ENCODE measurements at regions of chr5 and their contacts with region 1.

Region 1: DNA sequence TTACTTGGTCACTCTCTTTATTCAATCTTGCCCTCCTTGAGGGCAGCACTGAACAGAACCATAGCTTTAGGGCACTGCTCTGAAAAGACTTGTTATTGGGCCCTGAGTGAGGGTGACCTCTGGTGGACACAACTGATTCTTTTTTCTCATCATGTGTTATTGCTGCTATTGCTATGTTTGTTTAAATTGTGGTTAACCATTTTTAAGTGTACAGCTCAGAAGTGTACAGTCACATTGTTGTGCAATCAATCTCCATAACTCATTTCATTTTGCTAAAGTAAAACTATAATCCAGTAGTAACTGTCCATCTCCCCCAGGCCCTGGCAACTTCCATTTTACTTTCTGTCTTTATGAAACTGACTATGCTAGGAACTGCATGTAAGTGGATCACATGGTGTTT is 351.1 kb upstream of the RIOK2 start:
- DNase-seq: no peak
- H3K4me3 Mint-ChIP-seq: no peak overlapping the region
- H3K27ac Mint-ChIP-seq: no peak overlapping the region
- H3K4me1 Mint-ChIP-seq: peaks cover 5% of the 10 kb centered on the region
- H3K27me3 Mint-ChIP-seq: no peaks in the 10 kb centered on the region

Region 2: GRCh38 chr5:97231025-97231636 is 303.0 kb before region 1 on chr5:
- CTCF ChIA-PET with region 1: interaction called, 21 read pairs
- DNase-seq: peak; percentile 44
- H3K4me3 Mint-ChIP-seq: no peak overlapping the region
- H3K27ac Mint-ChIP-seq: no peak overlapping the region
- H3K4me1 Mint-ChIP-seq: no peaks in the 10 kb centered on the region
- H3K27me3 Mint-ChIP-seq: peaks cover 7% of the 10 kb centered on the region

Region 3: GRCh38 chr5:97476852-97477534 is 57.2 kb before region 1 on chr5:
- CTCF ChIA-PET with region 1: no interaction called
- DNase-seq: no peak
- H3K4me3 Mint-ChIP-seq: no peak overlapping the region
- H3K27ac Mint-ChIP-seq: no peak overlapping the region
- H3K4me1 Mint-ChIP-seq: no peaks in the 10 kb centered on the region
- H3K27me3 Mint-ChIP-seq: no peaks in the 10 kb centered on the region

Measured in activated naive CD4-positive, alpha-beta T cell treated with anti-CD3 and anti-CD28 coated beads, Interleukin-2, amount 10 ng/mL, durations not matched to agents 7 days and 5 days (primary cell).